Endothelial cell of umbilical vein (primary cell): ENCODE measurements at regions of chr2 and their contacts with region 1.

Region 1: GRCh38 chr2:161946489-161947107 is 127.4 kb downstream of the DPP4 start:
- DNase-seq: peak; percentile 67
- H3K4me3 ChIP-seq: no peak overlapping the region
- H3K27ac ChIP-seq: no peak overlapping the region
- H3K4me1 ChIP-seq: no peaks in the 10 kb centered on the region
- H3K27me3 ChIP-seq: peaks cover 0 to 3% of the 10 kb centered on the region in 2 experiments
- CTCF ChIP-seq: peak; percentile 32 to 39
- POLR2A ChIP-seq: no peak

Region 2: DNA sequence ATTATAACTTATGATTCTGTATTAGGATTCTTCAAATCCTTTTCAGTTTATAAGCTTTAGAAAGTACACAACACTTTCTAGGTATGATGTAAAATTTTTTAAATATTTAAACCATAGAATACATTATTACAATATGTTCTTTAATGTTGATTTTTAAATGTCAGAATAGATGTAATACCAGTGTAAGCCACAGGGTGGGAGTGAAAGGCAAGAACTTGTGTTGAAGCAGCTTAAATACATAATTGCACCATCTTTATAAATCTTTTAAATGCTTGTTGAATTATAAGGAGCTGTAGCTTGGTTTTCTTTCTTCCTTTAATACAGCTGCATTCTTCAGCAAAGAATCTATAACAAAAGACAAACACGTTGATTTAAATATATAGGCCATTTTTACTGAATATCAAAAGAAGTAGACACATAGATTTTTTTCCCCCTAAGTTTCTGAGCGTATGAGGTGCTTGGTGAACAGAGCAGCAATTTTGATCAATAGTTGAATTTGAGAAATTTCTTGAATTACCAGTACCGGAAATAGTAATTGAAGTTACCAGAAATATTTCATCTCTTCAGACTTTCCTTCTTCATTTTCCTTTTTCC is 723.4 kb before region 1 on chr2:
- CTCF ChIA-PET with region 1: interaction called, 10 read pairs
- POLR2A ChIA-PET with region 1: no interaction called
- dilution Hi-C with region 1: no loop called
- intact Hi-C with region 1: no loop called
- DNase-seq: peak; percentile 77
- H3K4me3 ChIP-seq: no peak overlapping the region
- H3K27ac ChIP-seq: no peak overlapping the region
- H3K4me1 ChIP-seq: no peaks in the 10 kb centered on the region
- H3K27me3 ChIP-seq: no peaks in the 10 kb centered on the region
- CTCF ChIP-seq: peak; percentile 24 to 26
- POLR2A ChIP-seq: no peak

Region 3: DNA sequence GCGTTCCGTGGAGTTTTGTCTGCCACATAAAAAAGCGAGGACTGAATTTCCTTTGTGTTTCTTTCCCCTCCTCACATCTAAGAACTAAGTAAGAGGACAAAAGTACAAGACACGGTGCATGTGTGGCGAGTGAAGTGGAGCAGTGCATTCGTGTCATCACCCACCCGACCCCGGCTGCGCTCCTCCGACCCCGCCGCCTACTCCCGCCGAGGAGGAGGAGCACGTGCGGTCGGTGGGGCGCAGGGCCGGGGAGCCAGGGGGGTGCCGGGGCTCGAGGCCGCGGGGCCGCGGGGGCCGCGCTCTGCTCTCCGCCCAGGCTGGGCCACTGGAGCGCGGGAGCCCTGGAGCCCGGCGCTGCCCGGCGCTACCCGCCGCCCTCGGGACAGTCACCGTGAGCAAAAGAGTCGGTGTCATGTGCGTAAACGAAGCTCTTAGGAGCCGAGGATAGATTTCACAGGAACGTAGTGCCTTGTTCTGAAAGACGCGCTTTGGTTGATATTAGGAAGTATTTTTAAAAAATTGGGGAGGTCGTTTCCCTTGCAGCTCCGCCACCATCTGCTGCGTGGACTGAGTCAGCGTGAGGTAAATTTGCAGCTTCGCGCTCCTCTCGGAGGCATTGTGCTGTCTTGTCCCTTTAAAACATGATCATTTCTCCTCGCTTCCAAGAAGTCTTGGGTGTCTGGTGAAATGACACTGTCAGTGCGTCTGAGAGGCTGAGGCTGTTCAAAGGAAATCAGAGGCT is 519.5 kb before region 1 on chr2:
- CTCF ChIA-PET with region 1: interaction called, 3 read pairs
- POLR2A ChIA-PET with region 1: no interaction called
- dilution Hi-C with region 1: no loop called
- intact Hi-C with region 1: loop called (anchors 1 kb)
- DNase-seq: peak; percentile 39
- H3K4me3 ChIP-seq: no peak overlapping the region
- H3K27ac ChIP-seq: no peak overlapping the region
- H3K4me1 ChIP-seq: peaks cover 5% of the 10 kb centered on the region
- H3K27me3 ChIP-seq: peaks cover 71 to 100% of the 10 kb centered on the region in 2 experiments
- CTCF ChIP-seq: no peak
- POLR2A ChIP-seq: no peak

Region 4: DNA sequence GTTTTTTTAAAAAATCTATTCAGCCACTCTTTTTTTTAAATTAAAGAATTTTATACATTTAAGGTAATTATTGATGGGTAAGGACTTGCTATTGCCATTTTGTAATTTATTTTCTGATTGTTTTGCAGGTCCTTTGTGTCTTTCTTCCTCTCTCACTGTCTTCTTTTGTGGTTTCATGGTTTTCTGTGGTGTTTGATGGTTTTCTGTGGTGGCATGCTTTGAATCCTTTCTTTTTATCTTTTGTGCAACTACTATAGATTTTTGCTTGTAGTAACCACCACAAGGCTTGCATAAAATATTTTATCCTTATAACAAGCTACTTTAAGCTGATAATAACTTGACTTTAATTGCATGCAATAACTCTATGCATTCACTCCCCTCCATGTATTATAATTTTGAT is 353.9 kb before region 1 on chr2:
- CTCF ChIA-PET with region 1: interaction called, 173 read pairs
- POLR2A ChIA-PET with region 1: no interaction called
- dilution Hi-C with region 1: no loop called
- intact Hi-C with region 1: no loop called
- DNase-seq: no peak
- H3K4me3 ChIP-seq: no peak overlapping the region
- H3K27ac ChIP-seq: no peak overlapping the region
- H3K4me1 ChIP-seq: no peaks in the 10 kb centered on the region
- H3K27me3 ChIP-seq: peaks cover 0 to 2% of the 10 kb centered on the region in 2 experiments
- CTCF ChIP-seq: no peak
- POLR2A ChIP-seq: no peak

Region 5: GRCh38 chr2:162091325-162092007 is 144.9 kb after region 1 on chr2:
- CTCF ChIA-PET with region 1: no interaction called
- POLR2A ChIA-PET with region 1: no interaction called
- dilution Hi-C with region 1: no loop called
- intact Hi-C with region 1: no loop called
- DNase-seq: peak; percentile 41
- H3K4me3 ChIP-seq: no peak overlapping the region
- H3K27ac ChIP-seq: peak overlapping the region; percentile 89
- H3K4me1 ChIP-seq: peaks cover 40% of the 10 kb centered on the region
- H3K27me3 ChIP-seq: no peaks in the 10 kb centered on the region
- CTCF ChIP-seq: no peak
- POLR2A ChIP-seq: no peak

Region 6: DNA sequence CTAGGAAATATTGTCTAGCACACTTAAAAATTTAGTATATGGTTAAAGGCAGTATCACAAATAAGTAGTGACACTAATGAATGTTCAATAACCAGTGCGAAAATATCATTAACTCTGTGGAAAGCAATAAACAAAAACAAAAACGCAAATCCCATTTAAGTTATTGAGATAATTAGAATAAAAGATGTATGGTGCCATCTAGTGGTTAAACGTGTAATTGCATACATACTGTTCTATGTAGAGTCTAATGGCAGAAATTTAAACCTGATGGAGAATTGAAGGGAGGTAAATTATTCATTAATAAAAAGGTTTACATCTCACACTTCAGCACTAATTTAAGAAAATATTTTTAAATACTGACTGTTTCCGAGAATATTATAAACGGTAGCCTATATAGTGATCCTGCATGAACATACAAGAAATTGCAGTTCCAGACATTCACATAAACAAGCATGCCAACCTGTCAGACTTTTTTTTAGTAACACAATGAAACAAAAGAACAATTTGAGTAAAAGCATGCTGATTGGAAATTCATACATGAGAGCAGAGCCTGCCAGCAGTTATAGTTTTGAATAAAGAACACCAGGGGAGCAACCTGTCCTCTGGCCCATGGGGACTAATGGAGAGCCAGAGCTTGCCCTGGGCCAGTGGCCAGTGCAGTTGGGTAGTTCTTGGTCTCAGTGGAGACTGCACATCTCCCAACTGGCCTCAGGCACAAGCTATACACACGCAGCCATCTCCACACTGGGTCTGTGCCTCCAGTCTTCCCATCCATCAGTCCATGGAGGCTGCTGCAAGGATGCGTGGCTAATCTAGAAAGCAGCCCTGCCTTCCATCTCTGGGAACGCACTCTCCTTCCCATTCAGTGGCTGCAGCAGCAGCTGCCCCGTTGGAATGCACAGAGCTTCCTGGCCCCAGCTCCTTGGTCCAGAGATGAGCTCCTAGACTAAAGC is 177.5 kb after region 1 on chr2:
- CTCF ChIA-PET with region 1: interaction called, 57 read pairs
- POLR2A ChIA-PET with region 1: no interaction called
- dilution Hi-C with region 1: no loop called
- intact Hi-C with region 1: loop called (anchors 1 kb)
- DNase-seq: peak; percentile 70
- H3K4me3 ChIP-seq: no peak overlapping the region
- H3K27ac ChIP-seq: no peak overlapping the region
- H3K4me1 ChIP-seq: peaks cover 13% of the 10 kb centered on the region
- H3K27me3 ChIP-seq: peaks cover 0 to 9% of the 10 kb centered on the region in 2 experiments
- CTCF ChIP-seq: peak; percentile 29 to 41
- POLR2A ChIP-seq: no peak

Region 7: DNA sequence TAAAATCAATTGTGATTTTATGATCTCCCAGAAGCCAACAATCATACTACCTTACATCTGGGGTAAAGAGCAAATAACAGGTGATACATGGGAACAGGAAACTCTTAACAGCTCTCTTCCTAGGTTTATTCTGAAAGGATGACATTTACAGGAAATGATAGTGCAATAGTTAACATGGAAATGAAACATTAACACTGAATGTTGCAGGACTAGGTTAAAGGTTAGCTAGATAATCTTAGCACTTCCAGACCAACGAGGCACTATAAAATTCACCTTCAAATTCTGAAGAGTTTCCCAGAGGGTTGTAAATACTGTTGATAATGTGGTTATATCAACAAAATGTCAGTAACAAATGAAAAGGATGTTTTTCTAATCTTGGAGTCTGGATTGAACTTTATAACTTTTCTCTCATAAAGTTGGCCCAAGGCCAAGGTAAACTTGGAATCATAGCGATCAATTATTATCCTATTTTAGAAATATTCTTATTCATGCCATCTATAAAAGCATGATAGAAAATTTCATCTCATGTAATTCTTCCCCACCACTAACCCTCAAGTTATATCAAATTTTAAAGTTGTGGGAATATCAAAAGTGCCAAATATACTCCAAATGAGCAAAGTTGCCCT is 238.3 kb after region 1 on chr2:
- CTCF ChIA-PET with region 1: no interaction called
- POLR2A ChIA-PET with region 1: no interaction called
- dilution Hi-C with region 1: no loop called
- intact Hi-C with region 1: no loop called
- DNase-seq: peak; percentile 5
- H3K4me3 ChIP-seq: no peak overlapping the region
- H3K27ac ChIP-seq: no peak overlapping the region
- H3K4me1 ChIP-seq: peaks cover 4% of the 10 kb centered on the region
- H3K27me3 ChIP-seq: no peaks in the 10 kb centered on the region
- CTCF ChIP-seq: no peak
- POLR2A ChIP-seq: no peak